GM18951 (cell line): ENCODE measurements at regions of chr15 and their contacts with region 1.

Region 1: GRCh38 chr15:33700695-33701304 is 267.5 kb upstream of the CHRM5 start:
- POLR2A ChIP-seq: no peak

Region 2: DNA sequence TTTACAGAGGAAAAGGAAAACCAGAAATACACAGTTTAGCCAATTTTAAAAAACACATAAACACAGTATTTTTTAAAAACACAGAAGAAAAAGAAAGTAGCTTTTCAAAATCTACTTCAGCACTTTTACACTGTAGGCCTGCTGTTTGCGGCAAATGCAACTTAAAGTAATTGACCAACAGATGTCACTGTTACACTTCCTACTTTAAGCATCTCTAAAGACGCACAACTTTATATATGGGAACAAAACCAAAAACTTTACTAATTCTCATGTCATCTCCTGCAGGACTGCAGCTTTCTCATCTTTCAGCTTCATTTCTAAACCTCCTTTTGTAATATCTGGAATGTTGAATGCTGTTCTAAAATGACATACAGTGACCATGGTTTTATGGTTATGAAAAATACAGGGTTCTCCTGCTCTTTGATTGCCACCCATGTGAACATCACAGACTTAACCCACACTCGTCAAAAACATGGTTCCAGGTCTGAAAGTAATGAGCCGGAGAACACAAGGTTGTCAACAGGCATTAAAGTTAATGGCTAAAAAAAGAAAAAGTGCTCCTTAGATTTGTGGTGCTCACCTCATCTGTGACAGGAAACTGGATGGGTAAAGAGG is 614.2 kb before region 1 on chr15:
- in situ Hi-C with region 1: loop called (anchors 25 kb)
- POLR2A ChIP-seq: no peak

Region 3: GRCh38 chr15:33309602-33310276 is 391.1 kb before region 1 on chr15:
- in situ Hi-C with region 1: loop called (anchors 5 kb)
- POLR2A ChIP-seq: no peak

Region 4: DNA sequence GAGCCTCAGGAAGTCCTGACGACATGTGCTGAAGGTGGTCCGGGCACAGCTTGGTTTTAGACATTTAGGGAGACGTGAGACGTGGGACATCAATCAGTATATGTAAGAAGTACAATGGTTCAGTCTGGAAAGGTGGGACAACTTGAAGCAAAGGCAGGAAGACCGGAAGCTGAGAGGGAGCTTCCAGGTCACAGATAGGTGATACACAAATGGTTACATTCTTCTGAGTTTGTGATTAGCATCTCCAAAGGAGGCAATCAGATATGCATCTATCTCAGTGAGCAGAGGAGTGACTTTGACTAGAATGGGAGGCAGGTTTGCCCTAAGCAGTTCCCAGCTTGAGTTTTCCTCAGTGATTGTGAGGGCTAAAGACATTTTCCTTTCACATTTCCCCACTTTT is 107.9 kb before region 1 on chr15:
- in situ Hi-C with region 1: no loop called
- POLR2A ChIP-seq: no peak

Region 5: GRCh38 chr15:33766389-33766788 is 65.6 kb after region 1 on chr15:
- in situ Hi-C with region 1: no loop called
- POLR2A ChIP-seq: no peak

Region 6: DNA sequence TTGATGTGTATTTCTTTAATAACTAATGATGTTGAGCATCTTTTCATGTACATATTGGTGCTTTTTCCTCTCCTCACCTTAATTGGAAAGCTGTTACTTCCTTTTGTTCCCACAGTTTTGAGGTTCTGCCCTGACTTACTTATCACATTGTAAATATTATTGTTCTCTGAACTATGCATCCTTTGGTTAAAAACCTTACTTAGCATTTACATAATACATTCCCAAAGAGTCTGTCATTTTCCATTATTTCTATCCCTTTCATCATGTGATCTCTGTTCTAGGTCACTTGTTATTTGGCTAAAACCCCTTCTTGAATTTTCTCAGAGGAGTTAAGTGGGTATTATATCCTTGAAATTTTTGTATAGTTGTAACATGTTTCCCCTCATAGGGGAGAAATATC is 603.8 kb after region 1 on chr15:
- in situ Hi-C with region 1: no loop called
- POLR2A ChIP-seq: no peak